Activated CD8-positive, alpha-beta T cell treated with anti-CD3 and anti-CD28 coated beads for 36 hours (primary cell): ENCODE measurements at regions of chr11 and their contacts with region 1.

Region 1: DNA sequence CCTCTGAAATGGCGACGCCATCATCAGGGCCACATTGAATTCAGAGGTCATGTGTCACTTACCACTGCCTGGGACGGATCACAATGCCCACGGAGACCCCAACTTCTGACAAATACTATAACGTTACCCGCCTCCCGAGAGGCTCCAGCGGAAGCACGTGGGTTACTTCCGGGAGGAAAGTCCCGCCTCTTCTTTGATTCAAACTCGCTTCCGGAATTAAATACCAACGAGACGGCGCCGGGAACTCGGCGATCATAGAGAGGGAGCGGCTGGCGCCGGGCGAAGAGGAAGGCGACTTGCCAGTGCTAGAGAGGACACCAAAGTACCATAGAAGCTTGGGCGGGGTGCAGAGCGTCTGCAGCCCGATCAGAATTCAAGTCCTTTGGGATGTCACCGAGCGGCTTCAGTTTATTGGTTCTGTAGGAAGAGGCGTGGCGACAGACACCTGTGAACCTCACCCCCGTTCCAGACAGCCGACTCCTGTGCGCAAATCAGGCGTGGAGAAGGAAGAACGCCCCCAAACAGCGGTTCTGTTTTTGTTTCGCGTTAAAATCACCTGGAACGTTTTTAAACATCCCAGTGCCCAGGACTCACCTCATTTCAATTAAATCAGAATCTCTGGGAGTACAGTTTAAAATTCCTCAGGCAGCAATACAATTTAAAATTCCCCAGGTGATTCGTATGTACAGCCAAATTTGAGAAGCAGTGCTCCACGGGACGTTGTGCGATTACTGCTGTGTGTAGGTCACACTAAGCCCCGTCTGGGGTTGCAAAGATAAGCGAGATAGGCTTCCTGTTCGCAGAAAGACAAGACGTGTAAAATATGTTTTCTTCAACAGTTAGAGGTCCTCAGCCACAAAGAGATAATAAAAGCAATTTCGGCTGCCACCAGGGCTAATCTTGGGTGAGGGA is at the start of gene TIMM10:
- DNase-seq: peak; percentile 97
- ATAC-seq: peak; percentile 96
- H3K4me3 Mint-ChIP-seq: peak within 1 kb of the TSS; percentile 82
- H3K27ac Mint-ChIP-seq: peak within 1 kb of the TSS; percentile 83
- H3K4me1 Mint-ChIP-seq: peaks cover 35% of the 10 kb centered on the region
- H3K27me3 Mint-ChIP-seq: no peaks in the 10 kb centered on the region
- CTCF ChIP-seq: no peak
- total RNA-seq, gene TIMM10: 75.2 to 84.2 TPM

Region 2: DNA sequence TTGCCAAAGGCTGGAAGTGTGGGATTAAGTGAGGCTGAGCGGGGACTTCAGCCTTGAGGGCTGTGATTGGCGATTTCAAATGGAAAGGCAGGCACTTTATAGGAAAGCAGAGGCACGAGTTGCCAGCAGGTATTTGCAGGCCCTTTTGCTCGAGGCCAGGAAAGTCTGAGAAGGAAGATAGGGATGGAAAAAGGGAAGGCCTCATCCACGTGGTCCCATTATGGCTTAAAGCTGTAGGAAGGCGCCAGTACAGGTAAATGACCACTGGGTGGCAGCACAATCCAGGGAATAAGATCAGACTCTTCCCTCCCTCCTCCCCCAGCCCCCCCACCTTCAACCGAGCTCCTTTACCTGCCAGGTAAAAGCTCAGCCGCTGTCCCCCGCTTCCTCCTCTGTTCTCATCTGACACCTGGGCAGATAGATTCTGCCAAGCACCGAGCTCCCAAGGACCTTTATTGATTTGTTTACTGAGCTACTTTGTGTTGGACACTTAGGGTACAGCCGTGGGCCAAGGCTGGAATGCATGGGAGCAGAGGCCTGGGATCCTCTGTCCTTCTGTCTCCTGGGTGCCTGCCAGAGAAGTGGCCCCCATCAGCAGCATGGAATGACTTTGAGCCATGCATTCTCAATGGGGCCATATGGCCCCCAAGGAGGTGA is 185.2 kb before region 1 on chr11:
- CTCF ChIA-PET with region 1: interaction called, 18 read pairs
- POLR2A ChIA-PET with region 1: no interaction called
- intact Hi-C with region 1: no loop called
- DNase-seq: peak; percentile 85
- ATAC-seq: peak; percentile 87
- H3K4me3 Mint-ChIP-seq: no peak overlapping the region
- H3K27ac Mint-ChIP-seq: no peak overlapping the region
- H3K4me1 Mint-ChIP-seq: peaks cover 6% of the 10 kb centered on the region
- H3K27me3 Mint-ChIP-seq: peaks cover 3% of the 10 kb centered on the region
- CTCF ChIP-seq: peak; percentile 93

Region 3: GRCh38 chr11:57463671-57464538 is 66.9 kb before region 1 on chr11:
- CTCF ChIA-PET with region 1: interaction called, 192 read pairs
- POLR2A ChIA-PET with region 1: interaction called, 3 read pairs
- intact Hi-C with region 1: no loop called
- DNase-seq: no peak
- ATAC-seq: no peak
- H3K4me3 Mint-ChIP-seq: no peak overlapping the region
- H3K27ac Mint-ChIP-seq: no peak overlapping the region
- H3K4me1 Mint-ChIP-seq: peaks cover 9% of the 10 kb centered on the region
- H3K27me3 Mint-ChIP-seq: peaks cover 20% of the 10 kb centered on the region
- CTCF ChIP-seq: no peak

Region 4: DNA sequence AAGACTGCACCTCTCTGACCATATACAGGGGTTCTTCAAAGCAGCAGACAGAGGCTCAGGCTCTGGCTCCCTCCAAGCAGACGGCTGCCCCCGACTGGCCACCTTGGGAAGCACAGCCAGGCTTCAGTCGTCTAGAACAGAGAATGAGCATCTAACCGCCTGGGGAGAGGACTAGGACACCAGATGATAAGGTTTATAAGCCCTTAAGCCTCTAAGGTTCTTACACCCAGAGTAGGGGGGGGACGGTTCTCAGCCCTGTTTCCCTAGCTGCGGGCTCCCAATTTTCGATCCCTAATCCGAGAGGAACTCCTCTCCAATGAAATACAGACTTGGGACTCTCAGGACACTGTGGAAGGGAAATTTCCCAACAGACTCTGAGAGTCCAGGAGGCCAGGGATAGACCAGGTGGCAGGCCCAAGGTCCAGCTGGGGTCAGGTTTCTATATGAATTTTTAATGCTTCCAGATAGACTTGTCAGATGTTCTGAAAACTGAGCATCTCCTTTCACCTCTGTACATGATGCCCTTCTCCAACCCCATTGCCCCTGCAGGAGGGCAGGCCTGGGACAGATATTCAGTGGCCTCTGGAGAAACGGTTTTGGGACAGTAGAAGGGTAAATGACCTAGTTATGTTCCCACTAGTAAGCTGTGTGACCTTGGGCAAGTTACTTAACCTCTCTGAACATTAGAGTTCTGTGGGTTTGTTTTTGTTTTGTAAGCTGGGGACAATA is 50.3 kb before region 1 on chr11:
- CTCF ChIA-PET with region 1: interaction called, 425 read pairs
- POLR2A ChIA-PET with region 1: interaction called, 4 read pairs
- intact Hi-C with region 1: no loop called
- DNase-seq: peak; percentile 88
- ATAC-seq: peak; percentile 63
- H3K4me3 Mint-ChIP-seq: no peak overlapping the region
- H3K27ac Mint-ChIP-seq: no peak overlapping the region
- H3K4me1 Mint-ChIP-seq: peaks cover 19% of the 10 kb centered on the region
- H3K27me3 Mint-ChIP-seq: peaks cover 12% of the 10 kb centered on the region
- CTCF ChIP-seq: peak; percentile 90

Region 5: GRCh38 chr11:57499413-57499982 is 31.4 kb before region 1 on chr11:
- CTCF ChIA-PET with region 1: interaction called, 425 read pairs
- POLR2A ChIA-PET with region 1: interaction called, 10 read pairs
- intact Hi-C with region 1: no loop called
- DNase-seq: peak; percentile 61
- ATAC-seq: peak; percentile 93
- H3K4me3 Mint-ChIP-seq: no peak overlapping the region
- H3K27ac Mint-ChIP-seq: no peak overlapping the region
- H3K4me1 Mint-ChIP-seq: peaks cover 6% of the 10 kb centered on the region
- H3K27me3 Mint-ChIP-seq: no peaks in the 10 kb centered on the region
- CTCF ChIP-seq: no peak

Region 6: GRCh38 chr11:57515332-57516060 is 15.4 kb before region 1 on chr11 and contains the start of gene SLC43A1:
- CTCF ChIA-PET with region 1: interaction called, 170 read pairs
- POLR2A ChIA-PET with region 1: interaction called, 57 read pairs
- intact Hi-C with region 1: no loop called
- DNase-seq: peak; percentile 48
- ATAC-seq: peak; percentile 29
- H3K4me3 Mint-ChIP-seq: peak within 1 kb of the TSS; percentile 94
- H3K27ac Mint-ChIP-seq: peak within 1 kb of the TSS; percentile 95
- H3K4me1 Mint-ChIP-seq: peaks cover 29% of the 10 kb centered on the region
- H3K27me3 Mint-ChIP-seq: no peaks in the 10 kb centered on the region
- CTCF ChIP-seq: no peak
- total RNA-seq, gene SLC43A1: 32.1 to 34.0 TPM